ENCODE measurements at regions of chr9 and their contacts with region 1.

Region 1: DNA sequence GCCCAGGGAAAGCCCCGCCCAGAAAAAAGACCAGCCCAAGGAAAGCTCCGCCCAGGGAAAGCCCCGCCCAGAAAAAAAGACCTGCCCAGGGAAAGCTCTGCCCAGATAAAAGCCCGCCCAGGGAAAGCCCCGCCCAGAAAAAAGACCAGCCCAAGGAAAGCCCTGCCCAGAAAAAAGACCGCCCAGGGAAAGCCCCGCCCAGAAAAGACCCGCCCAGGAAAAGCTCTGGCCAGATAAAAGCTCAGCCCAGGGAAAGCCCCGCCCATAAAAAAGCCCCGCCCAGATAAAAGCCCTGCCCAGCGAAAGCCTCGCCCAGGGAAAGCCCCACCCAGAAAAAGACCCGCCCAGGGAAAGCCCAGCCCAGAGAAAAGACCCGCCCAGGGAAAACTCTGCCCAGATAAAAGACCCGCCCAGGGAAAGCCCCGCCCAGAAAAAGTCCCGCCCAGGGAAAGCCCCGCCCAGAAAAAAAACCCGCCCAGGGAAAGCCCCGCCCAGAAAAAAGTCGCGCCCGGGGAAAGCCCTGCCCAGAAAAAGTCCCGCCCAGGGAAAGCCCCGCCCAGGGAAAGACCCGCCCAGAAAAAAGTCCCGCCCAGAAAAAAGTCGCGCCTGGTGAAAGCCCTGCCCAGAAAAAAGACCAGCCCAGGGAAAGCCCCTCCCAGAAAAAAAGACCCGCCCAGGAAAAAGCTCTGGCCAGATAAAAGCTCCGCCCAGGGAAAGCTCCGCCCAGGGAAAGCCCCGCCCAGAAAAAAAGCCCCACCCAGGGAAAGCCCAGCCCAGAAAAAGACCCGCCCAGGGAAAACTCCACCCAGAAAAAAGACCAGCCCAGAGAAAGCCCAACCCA is 11.9 kb downstream of the GRIN1 start:
- DNase-seq: peak; percentile 95
- H3K4me3 ChIP-seq: peak overlapping the region; percentile 40
- H3K27ac ChIP-seq: peak overlapping the region; percentile 42
- H3K4me1 ChIP-seq: peaks cover 17% of the 10 kb centered on the region
- CTCF ChIP-seq: no peak

Region 2: DNA sequence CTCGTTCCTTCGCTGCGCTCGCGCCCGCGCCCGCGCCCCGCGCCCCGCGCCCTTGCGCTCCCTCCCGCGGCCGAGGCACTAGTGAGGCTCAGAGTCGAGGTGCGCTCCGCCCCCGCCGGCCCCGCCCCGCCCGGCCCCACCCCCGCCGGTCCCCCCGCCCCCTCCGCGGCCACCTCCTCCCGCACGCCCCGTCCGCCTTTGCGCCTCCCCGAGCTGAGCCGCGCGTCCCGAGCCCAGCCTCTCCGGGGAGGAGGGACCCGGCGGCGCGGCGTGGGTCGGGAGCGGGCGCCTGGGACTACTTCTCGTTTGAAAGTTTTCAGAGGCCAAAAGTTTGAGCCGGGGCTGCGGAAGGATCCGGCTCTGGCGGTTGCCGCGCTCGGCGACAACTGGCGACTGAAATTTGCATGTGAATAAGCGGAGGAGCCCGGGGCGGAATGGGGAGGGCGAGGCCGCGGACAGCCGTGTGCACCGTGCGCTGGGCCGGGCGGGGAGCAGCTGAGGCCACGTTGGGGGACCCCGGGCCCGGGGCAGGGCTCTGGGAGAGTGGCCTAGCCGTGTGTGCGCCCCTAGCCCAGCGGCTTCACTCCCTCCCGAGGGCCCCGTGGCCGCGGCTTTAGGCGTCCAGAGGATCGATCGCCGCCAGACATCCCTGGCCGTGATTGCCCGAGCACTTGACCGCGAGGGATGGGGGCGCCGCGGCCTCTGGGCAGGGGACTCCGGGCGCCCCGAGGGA is 604.7 kb before region 1 on chr9 and contains the start of gene NOTCH1:
- CTCF ChIA-PET with region 1: no interaction called
- POLR2A ChIA-PET with region 1: no interaction called
- intact Hi-C with region 1: loop called (anchors 10 kb)
- DNase-seq: peak; percentile 91
- H3K4me3 ChIP-seq: peak within 1 kb of the TSS; percentile 77
- H3K27ac ChIP-seq: peak within 1 kb of the TSS; percentile 88
- H3K4me1 ChIP-seq: peaks cover 26% of the 10 kb centered on the region
- CTCF ChIP-seq: no peak
- total RNA-seq, gene NOTCH1: 9.3 and 17.6 TPM in 2 replicates

Region 3: DNA sequence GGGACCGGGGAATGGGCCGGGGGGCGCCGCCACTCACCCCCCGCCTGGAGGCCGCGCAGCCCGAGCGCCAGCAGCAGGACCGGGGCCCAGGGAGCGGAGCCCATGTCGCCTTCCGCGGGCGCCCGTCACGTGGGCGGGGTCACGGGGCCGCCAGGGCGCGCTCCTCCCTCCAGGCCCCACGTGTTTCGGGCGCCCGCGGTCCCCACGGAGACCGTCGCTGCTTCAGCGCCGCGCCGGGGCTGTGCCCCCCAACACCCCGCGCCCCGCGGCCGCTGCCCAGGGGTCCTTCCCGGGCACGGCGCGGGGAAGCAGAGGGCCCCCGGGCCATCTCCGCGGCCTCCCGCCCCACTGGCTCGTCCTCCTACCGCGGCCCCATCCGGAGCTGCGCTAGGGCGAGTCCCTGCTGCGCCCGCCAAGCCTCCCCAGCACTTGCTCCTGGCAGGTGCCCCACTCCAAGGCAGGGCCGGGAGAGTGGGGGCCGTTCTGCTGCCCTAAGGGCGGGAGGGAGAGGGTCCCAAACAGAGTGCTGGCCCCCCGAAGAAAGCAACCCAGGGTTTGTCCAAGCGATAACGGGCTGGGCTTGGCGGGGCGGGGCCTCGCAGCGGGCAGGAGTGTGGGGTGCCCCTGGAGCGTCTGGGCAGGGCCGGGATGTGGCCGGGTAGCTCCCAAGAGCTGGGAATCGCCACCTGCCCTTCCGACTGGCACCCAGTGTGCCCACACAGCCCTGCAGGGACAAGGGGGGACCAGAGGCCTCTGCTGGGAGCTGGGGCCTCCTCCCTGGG is 36.0 kb before region 1 on chr9 and contains the start of gene DPP7:
- CTCF ChIA-PET with region 1: no interaction called
- POLR2A ChIA-PET with region 1: interaction called, 4 read pairs
- intact Hi-C with region 1: loop called (anchors 5 kb)
- DNase-seq: peak; percentile 82
- H3K4me3 ChIP-seq: peak within 1 kb of the TSS; percentile 95
- H3K27ac ChIP-seq: peak within 1 kb of the TSS; percentile 42
- H3K4me1 ChIP-seq: peaks cover 34% of the 10 kb centered on the region
- CTCF ChIP-seq: no peak
- total RNA-seq, gene DPP7: 173 and 182 TPM in 2 replicates

Region 4: GRCh38 chr9:137129456-137130175 is 21.2 kb before region 1 on chr9:
- CTCF ChIA-PET with region 1: interaction called, 5 read pairs
- POLR2A ChIA-PET with region 1: interaction called, 52 read pairs
- intact Hi-C with region 1: loop called (anchors 1 kb)
- DNase-seq: peak; percentile 94
- H3K4me3 ChIP-seq: peak overlapping the region; percentile 94
- H3K27ac ChIP-seq: peak overlapping the region; percentile 92
- H3K4me1 ChIP-seq: peaks cover 35% of the 10 kb centered on the region
- CTCF ChIP-seq: no peak

Region 5: DNA sequence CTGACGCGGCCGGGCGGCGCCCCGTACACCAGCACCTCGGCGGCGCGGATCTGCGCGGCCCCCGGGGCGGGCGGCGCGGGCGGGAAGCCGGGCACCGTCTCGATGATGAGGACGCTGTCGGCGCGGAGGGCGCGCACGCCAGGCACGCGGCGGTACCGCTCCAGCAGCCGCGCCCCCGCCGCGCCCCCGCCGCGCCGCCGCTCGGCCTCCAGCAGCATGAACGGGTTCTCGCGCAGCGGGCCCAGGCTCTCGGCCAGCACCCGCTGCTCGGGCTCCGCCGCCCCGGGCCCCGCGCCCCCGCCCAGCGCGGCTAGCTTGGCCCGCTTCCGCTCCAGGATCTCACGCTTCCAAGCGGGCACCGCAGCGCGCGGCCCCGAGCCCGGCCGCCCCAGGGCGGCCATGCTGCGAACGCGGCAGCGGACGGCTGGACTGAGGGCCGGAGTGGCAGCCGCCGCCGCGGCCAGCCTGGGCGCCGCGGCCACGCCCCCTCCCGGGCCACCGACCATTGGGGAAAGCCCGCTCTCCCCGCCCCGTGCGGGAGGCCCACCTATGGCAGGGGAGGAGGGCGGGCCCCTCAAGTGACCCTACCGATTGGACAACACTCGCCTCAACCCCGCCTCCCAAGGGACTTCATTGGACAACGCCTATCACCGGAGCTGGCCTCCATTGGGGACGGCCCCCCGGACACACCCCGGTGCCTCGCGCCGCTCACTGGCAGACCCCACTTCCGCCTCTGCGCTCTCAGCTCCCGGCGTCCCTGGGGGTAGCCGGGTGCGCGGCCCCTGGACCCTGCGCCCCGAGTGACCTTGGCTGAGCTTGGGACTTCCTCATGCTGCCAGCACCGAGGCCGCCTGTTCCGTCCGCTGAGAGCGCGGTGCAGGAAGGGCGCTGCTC is 49.7 kb after region 1 on chr9 and contains the start of gene TPRN:
- CTCF ChIA-PET with region 1: no interaction called
- POLR2A ChIA-PET with region 1: interaction called, 4 read pairs
- intact Hi-C with region 1: loop called (anchors 2 kb)
- DNase-seq: peak; percentile 100
- H3K4me3 ChIP-seq: peak within 1 kb of the TSS; percentile 76
- H3K27ac ChIP-seq: peak within 1 kb of the TSS; percentile 49
- H3K4me1 ChIP-seq: peaks cover 33% of the 10 kb centered on the region
- CTCF ChIP-seq: no peak
- total RNA-seq, gene TPRN: 9.0 and 10.3 TPM in 2 replicates

Measured in OCI-LY7 (cell line).